ENCODE measurements at regions of chr5 and their contacts with region 1.

Region 1: GRCh38 chr5:100913298-100913697 is 10.2 kb upstream of the ST8SIA4 start:
- DNase-seq: no peak
- ATAC-seq: no peak
- H3K4me3 ChIP-seq: no peak overlapping the region
- H3K4me3 Mint-ChIP-seq: no peak overlapping the region
- H3K27ac ChIP-seq: no peak overlapping the region
- H3K27ac Mint-ChIP-seq: no peak overlapping the region
- H3K4me1 ChIP-seq: no peaks in the 10 kb centered on the region
- H3K4me1 Mint-ChIP-seq: peaks cover 0 to 3% (median 0%) of the 10 kb centered on the region in 3 donors
- H3K27me3 ChIP-seq: no peaks in the 10 kb centered on the region
- H3K27me3 Mint-ChIP-seq: no peaks in the 10 kb centered on the region

Region 2: GRCh38 chr5:100890461-100891008 is 22.8 kb before region 1 on chr5:
- CTCF ChIA-PET with region 1: no interaction called
- POLR2A ChIA-PET with region 1: interaction called in 1 of 2 experiments, 11 read pairs
- DNase-seq: peak in 1 of 35 experiments; percentile 20
- ATAC-seq: no peak
- H3K4me3 ChIP-seq: no peak overlapping the region
- H3K4me3 Mint-ChIP-seq: peak overlapping the region; percentile 64 to 70 (median 70)
- H3K27ac ChIP-seq: peak overlapping the region; percentile 62
- H3K27ac Mint-ChIP-seq: peak overlapping the region; percentile 88 to 90
- H3K4me1 ChIP-seq: peaks cover 2 to 53% of the 10 kb centered on the region in 2 experiments
- H3K4me1 Mint-ChIP-seq: peaks cover 68 to 79% (median 69%) of the 10 kb centered on the region in 3 donors
- H3K27me3 ChIP-seq: no peaks in the 10 kb centered on the region
- H3K27me3 Mint-ChIP-seq: no peaks in the 10 kb centered on the region

Measured in T-cell (primary cell).